ENCODE measurements at regions of chr7 and their contacts with region 1.

Region 1: GRCh38 chr7:114865564-114865963 is 56.3 kb upstream of the MDFIC start:
- DNase-seq: peak; percentile 64
- ATAC-seq: peak; percentile 88
- H3K4me3 ChIP-seq: no peak overlapping the region
- H3K27ac ChIP-seq: no peak overlapping the region
- H3K4me1 ChIP-seq: no peaks in the 10 kb centered on the region
- H3K27me3 ChIP-seq: no peaks in the 10 kb centered on the region
- CTCF ChIP-seq: peak; percentile 82
- POLR2A ChIP-seq: no peak
- RAD21 ChIP-seq: peak; percentile 96

Region 2: DNA sequence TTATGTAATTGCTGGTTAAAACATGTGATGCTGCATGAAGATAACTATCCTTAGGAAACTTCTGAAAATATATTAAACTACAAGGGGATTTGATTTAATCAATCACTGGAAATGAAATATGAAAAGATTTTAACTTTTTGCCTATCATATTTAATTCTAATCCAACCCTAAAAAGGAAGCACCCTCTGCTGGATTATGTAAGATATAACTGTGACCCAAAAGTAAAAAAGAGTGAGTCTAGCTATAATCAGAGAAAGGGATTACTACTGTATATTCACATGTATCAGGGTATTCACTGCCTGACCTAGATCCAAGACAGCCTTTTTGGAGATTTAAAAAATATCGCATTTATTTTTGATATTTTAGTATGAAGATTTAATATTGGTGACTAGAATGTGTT is 351.8 kb after region 1 on chr7:
- CTCF ChIA-PET with region 1: no interaction called
- POLR2A ChIA-PET with region 1: no interaction called
- dilution Hi-C with region 1: no loop called
- in situ Hi-C with region 1: no loop called
- intact Hi-C with region 1: loop called (anchors 1 kb)
- DNase-seq: no peak
- ATAC-seq: no peak
- H3K4me3 ChIP-seq: no peak overlapping the region
- H3K27ac ChIP-seq: no peak overlapping the region
- H3K4me1 ChIP-seq: peaks cover 3% of the 10 kb centered on the region
- H3K27me3 ChIP-seq: no peaks in the 10 kb centered on the region
- CTCF ChIP-seq: peak; percentile 28; the same call in 1 of the 2 replicates
- POLR2A ChIP-seq: no peak
- RAD21 ChIP-seq: peak; percentile 32

Region 3: DNA sequence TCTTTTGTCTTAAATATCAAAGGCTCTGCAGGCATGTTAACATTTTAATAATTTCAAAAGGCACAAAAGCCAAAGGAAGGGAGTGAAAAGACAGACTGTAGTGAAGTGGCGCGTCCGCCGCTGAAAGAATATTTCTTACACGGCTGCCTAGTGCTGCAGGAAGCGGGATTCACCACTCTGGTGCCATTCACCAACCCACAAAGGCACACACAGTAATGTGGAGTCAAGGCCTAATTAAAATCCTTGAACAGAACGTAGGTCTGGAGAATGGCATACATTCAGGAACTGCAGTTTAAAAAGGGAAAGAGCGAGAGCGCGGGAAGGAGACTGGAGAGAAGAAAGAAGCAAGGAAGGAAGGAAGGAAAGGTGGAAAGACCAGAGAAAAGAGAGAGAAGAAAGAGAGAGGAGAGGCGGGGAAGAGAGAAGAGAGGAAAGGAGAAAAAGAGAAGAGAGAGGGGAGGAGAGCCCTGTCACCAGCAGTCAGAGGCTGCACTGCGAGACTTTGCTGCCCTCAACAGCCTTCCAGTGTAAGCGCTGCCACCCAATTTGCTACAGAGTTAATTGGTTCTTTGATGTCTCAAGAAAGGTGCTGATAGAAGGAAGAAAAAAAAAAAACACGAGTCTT is 610.3 kb after region 1 on chr7:
- CTCF ChIA-PET with region 1: no interaction called
- POLR2A ChIA-PET with region 1: interaction called, 3 read pairs
- dilution Hi-C with region 1: no loop called
- in situ Hi-C with region 1: no loop called
- intact Hi-C with region 1: loop called (anchors 10 kb)
- DNase-seq: no peak
- ATAC-seq: no peak
- H3K4me3 ChIP-seq: no peak overlapping the region
- H3K27ac ChIP-seq: no peak overlapping the region
- H3K4me1 ChIP-seq: no peaks in the 10 kb centered on the region
- H3K27me3 ChIP-seq: no peaks in the 10 kb centered on the region
- CTCF ChIP-seq: no peak
- POLR2A ChIP-seq: no peak
- RAD21 ChIP-seq: no peak

Region 4: GRCh38 chr7:115748131-115748738 is 882.7 kb after region 1 on chr7:
- CTCF ChIA-PET with region 1: interaction called, 3 read pairs
- POLR2A ChIA-PET with region 1: interaction called, 4 read pairs
- dilution Hi-C with region 1: no loop called
- in situ Hi-C with region 1: no loop called
- intact Hi-C with region 1: loop called (anchors 5 kb)
- DNase-seq: peak; percentile 8
- ATAC-seq: no peak
- H3K4me3 ChIP-seq: no peak overlapping the region
- H3K27ac ChIP-seq: no peak overlapping the region
- H3K4me1 ChIP-seq: no peaks in the 10 kb centered on the region
- H3K27me3 ChIP-seq: no peaks in the 10 kb centered on the region
- CTCF ChIP-seq: peak; percentile 41
- POLR2A ChIP-seq: no peak
- RAD21 ChIP-seq: peak; percentile 55

Region 5: GRCh38 chr7:115910541-115911164 is 1045.1 kb after region 1 on chr7:
- CTCF ChIA-PET with region 1: no interaction called
- POLR2A ChIA-PET with region 1: no interaction called
- dilution Hi-C with region 1: no loop called
- in situ Hi-C with region 1: no loop called
- intact Hi-C with region 1: loop called (anchors 5 kb)
- DNase-seq: peak; percentile 38
- ATAC-seq: peak; percentile 77
- H3K4me3 ChIP-seq: no peak overlapping the region
- H3K27ac ChIP-seq: no peak overlapping the region
- H3K4me1 ChIP-seq: no peaks in the 10 kb centered on the region
- H3K27me3 ChIP-seq: no peaks in the 10 kb centered on the region
- CTCF ChIP-seq: peak; percentile 60
- POLR2A ChIP-seq: no peak
- RAD21 ChIP-seq: peak; percentile 65

Measured in IMR-90 (cell line).